Heart right ventricle (tissue), 16 donors: ENCODE measurements at regions of chr10 and their contacts with region 1.

Region 1: GRCh38 chr10:62816331-62817120 is at the start of gene EGR2:
- DNase-seq: peak; percentile 89 to 94
- ATAC-seq: peak; percentile 82 to 93 (median 87)
- H3K4me3 ChIP-seq: peak within 1 kb of the TSS; percentile 54 to 94 (median 74)
- H3K27ac ChIP-seq: peak within 1 kb of the TSS; percentile 11 to 93 (median 82)
- H3K4me1 ChIP-seq: peaks cover 2 to 49% (median 44%) of the 10 kb centered on the region in 9 donors
- H3K27me3 ChIP-seq: peaks cover 0 to 67% (median 47%) of the 10 kb centered on the region in 7 donors
- CTCF ChIP-seq: peak in 1 of 9 donors; percentile 5
- total RNA-seq, gene EGR2: 0.49 to 19.3 (median 3.6) TPM

Region 2: DNA sequence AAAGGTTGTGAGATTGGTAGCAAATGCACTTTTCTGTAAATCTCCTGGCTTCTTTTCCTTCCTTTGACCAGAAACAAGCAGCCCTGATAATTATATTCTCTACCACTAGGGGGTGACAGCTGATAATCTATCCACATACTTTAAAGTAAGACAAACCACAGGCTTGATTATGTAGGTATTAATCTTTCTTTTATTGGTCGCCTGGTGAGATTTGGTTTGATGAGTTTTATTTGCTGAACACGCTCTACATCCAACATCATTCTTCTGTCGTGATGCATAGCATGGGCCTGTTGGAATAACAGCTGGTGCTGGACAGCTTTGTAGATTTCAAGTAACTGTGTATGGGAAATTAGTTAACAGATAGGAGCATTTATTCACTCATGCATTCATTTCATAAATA is 378.8 kb before region 1 on chr10:
- intact Hi-C with region 1: loop called in 6 of 10 experiments (anchors 5 to 10 kb)
- DNase-seq: peak in 1 of 2 donors; percentile 29
- ATAC-seq: peak in 4 of 8 donors; percentile 56 to 69 (median 63)
- H3K4me3 ChIP-seq: no peak overlapping the region
- H3K27ac ChIP-seq: no peak overlapping the region
- H3K4me1 ChIP-seq: peaks cover 0 to 11% (median 0%) of the 10 kb centered on the region in 9 donors
- H3K27me3 ChIP-seq: peaks cover 0 to 7% (median 0%) of the 10 kb centered on the region in 7 donors
- CTCF ChIP-seq: peak; percentile 52 to 88 (median 74)

Region 3: DNA sequence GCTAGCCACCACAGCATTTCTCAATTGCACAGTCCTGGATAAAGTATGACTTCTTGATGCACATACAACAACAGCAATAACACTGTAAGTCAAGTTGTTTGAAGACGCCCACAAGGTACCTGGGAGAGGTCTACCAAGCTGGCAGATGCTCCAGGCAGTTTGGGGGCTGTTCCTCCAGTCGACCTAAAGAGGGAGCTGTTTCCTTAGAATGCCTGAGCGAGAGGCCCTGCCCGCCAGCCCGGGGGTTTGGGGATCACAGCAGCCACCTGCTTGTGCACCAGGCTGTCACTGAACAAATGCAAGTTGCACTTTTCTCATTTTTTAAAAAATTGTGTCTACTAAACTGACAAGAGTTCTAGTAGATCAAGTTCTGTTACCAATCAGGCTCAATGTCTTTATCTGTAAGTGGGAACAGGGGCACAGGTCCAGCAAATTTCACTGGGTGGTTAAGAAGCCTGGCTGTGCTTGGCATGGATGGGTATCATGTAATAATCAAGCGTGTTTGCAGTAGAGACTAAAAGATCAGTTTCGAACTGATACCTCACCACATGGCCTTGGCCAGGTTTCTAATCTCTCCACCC is 205.8 kb before region 1 on chr10:
- intact Hi-C with region 1: loop called (anchors 1 to 10 kb)
- DNase-seq: peak; percentile 28 to 41
- ATAC-seq: peak; percentile 55 to 78 (median 68)
- H3K4me3 ChIP-seq: no peak overlapping the region
- H3K27ac ChIP-seq: no peak overlapping the region
- H3K4me1 ChIP-seq: peaks cover 0 to 20% (median 0%) of the 10 kb centered on the region in 9 donors
- H3K27me3 ChIP-seq: peaks cover 0 to 9% (median 0%) of the 10 kb centered on the region in 7 donors
- CTCF ChIP-seq: peak; percentile 53 to 89 (median 84)

Region 4: GRCh38 chr10:62689712-62690111 is 126.8 kb before region 1 on chr10:
- intact Hi-C with region 1: loop called in 1 of 10 experiments (anchors 5 kb)
- DNase-seq: peak in 1 of 2 donors; percentile 34
- ATAC-seq: peak in 6 of 8 donors; percentile 26 to 85 (median 72)
- H3K4me3 ChIP-seq: no peak overlapping the region
- H3K27ac ChIP-seq: peak overlapping the region in 4 of 10 donors; percentile 27 to 55 (median 42)
- H3K4me1 ChIP-seq: peaks cover 0 to 36% (median 24%) of the 10 kb centered on the region in 9 donors
- H3K27me3 ChIP-seq: no peaks in the 10 kb centered on the region
- CTCF ChIP-seq: no peak

Region 5: DNA sequence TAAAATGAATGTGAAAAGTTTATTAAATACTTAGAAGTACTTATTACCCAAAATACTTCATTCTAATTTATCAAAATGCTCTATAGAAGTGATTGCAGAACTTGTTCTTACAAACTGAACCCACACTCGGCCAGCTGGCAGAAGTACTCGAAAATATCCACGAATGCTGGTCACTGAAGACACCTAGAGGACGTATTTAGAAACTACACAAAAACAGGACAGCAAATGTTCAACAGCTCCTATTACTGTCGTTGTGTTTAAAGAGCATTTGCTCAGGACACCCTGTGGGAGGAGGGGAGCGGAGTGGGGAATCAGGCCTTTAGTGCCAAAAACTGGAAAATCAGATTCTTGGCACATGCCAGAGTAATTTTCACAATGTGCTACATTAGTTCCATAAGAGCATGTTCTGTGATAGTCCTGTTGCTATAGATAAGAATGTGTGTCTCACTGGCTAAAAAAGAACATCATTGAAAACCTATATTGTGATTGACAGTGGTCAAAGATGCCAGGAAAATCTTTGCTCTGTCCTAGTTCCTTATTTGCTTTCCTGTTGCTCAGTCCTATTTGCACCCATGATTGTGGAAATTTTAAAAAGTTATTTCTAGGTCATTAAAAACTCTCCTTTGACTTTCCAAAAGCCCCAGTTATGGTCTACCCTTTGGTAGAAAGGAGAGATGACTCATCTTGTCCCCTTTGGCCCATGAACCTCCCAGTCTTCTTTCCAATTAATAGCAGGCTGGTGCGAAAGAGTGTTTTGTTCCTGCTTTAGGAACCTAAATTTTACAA is 267.6 kb after region 1 on chr10:
- intact Hi-C with region 1: loop called in 2 of 10 experiments (anchors 5 to 10 kb)
- DNase-seq: peak; percentile 14 to 61
- ATAC-seq: peak; percentile 69 to 91 (median 88)
- H3K4me3 ChIP-seq: no peak overlapping the region
- H3K27ac ChIP-seq: peak overlapping the region in 2 of 10 donors; percentile 3 to 39
- H3K4me1 ChIP-seq: peaks cover 0 to 10% (median 0%) of the 10 kb centered on the region in 9 donors
- H3K27me3 ChIP-seq: peaks cover 0 to 5% (median 0%) of the 10 kb centered on the region in 7 donors
- CTCF ChIP-seq: peak; percentile 27 to 81 (median 70)

Region 6: GRCh38 chr10:63157845-63158624 is 341.5 kb after region 1 on chr10:
- intact Hi-C with region 1: loop called in 6 of 10 experiments (anchors 5 to 10 kb)
- DNase-seq: peak in 1 of 2 donors; percentile 28
- ATAC-seq: peak; percentile 67 to 77 (median 71)
- H3K4me3 ChIP-seq: no peak overlapping the region
- H3K27ac ChIP-seq: no peak overlapping the region
- H3K4me1 ChIP-seq: peaks cover 0 to 24% (median 13%) of the 10 kb centered on the region in 9 donors
- H3K27me3 ChIP-seq: no peaks in the 10 kb centered on the region
- CTCF ChIP-seq: peak; percentile 55 to 89 (median 84)